Pancreas (tissue), 10 donors: ENCODE measurements at regions of chr2 and their contacts with region 1.

Region 1: GRCh38 chr2:85342156-85342555 is 12.2 kb downstream of the RETSAT start:
- DNase-seq: no peak
- ATAC-seq: no peak
- H3K4me3 ChIP-seq: no peak overlapping the region
- H3K27ac ChIP-seq: no peak overlapping the region
- H3K4me1 ChIP-seq: no peaks in the 10 kb centered on the region
- H3K27me3 ChIP-seq: no peaks in the 10 kb centered on the region
- CTCF ChIP-seq: no peak

Region 2: DNA sequence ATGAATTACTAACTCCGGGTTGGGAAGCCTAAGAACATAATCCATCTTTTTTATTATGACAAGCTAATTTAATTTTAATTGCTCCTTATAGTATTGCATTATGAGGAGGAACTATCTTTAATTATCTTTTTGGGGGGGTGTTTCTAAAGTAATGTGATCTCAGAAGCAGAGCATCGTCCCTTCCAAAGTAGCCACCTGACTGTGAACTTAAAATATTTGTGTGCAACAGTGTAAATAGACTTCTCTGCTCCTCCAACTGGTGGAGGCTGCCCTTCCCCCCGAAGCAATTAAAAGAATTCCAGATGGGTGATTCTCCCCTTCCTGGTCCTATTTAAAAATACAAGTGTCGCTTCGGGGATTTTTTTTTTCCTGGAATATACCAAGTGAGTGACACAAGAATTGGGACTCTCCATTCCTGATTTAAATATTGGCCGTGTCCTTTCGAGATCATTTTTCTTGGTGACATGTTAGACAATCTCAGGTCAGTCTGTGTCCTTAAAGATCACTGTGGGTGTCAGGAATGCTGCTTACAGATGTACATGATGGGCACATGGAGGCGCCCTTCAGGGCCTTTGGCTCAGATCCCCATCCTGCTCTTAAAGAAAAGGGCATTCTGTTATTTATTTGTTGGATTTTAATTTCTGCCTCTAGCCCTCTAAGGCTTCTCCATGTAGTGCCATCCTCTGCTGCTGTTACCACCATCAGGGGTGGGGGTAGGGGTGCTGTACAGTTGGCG is 153.1 kb before region 1 on chr2:
- intact Hi-C with region 1: no loop called
- DNase-seq: no peak
- ATAC-seq: no peak
- H3K4me3 ChIP-seq: no peak overlapping the region
- H3K27ac ChIP-seq: no peak overlapping the region
- H3K4me1 ChIP-seq: no peaks in the 10 kb centered on the region
- H3K27me3 ChIP-seq: no peaks in the 10 kb centered on the region
- CTCF ChIP-seq: no peak

Region 3: DNA sequence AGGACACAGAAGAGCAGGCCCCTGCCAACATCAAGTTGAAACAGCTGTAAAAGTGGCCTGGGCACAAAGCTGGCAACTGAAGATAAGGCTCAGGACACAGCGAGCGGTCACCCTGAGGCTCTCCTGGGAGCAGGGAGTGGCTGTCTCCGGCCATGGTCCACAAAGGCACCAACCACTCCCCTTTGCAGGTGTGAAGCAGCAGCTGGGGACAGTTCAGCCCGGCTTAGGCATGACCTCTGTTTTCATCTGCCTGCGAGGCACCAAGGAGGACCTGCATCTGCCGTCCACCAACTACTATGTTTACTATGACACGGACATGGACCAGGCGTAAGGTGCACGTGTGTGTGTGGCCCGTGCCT is 27.3 kb before region 1 on chr2:
- intact Hi-C with region 1: loop called in 1 of 3 experiments (anchors 2 kb)
- DNase-seq: no peak
- ATAC-seq: no peak
- H3K4me3 ChIP-seq: no peak overlapping the region
- H3K27ac ChIP-seq: no peak overlapping the region
- H3K4me1 ChIP-seq: no peaks in the 10 kb centered on the region
- H3K27me3 ChIP-seq: no peaks in the 10 kb centered on the region
- CTCF ChIP-seq: no peak